H1 (cell line): ENCODE measurements at regions of chr6 and their contacts with region 1.

Region 1: DNA sequence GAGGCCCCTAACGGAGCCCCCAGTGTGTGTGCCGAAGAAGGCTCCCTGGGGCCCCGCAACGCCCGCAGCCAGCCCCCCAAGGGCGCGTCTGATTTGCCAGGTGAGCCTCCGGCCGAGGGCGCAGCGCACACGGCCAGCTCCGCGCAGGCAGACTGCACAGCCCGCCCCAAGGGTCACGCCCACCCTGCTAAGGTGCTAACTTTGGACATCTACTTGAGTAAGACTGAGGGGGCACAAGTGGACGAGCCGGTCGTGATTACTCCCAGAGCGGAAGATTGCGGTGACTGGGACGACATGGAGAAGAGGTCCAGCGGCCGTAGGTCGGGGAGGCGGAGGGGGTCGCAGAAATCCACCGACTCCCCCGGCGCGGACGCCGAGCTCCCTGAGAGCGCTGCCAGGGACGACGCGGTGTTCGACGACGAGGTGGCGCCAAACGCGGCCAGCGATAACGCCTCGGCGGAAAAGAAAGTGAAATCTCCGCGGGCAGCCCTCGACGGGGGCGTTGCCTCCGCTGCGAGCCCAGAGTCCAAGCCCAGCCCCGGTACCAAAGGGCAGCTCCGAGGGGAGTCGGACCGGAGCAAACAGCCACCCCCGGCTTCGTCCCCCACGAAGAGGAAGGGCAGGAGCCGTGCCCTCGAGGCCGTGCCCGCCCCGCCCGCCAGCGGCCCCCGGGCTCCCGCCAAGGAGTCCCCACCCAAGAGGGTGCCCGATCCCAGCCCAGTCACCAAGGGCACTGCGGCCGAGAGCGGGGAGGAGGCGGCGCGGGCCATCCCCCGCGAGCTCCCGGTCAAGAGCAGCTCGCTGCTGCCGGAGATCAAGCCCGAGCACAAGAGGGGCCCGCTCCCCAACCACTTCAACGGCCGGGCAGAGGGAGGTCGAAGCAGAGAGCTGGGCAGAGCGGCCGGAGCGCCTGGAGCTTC is 117.0 kb downstream of the RTN4IP1 start:
- DNase-seq: peak in 1 of 2 experiments; percentile 79
- H3K4me3 ChIP-seq: peak overlapping the region; percentile 37 to 69 (median 56)
- H3K27ac ChIP-seq: no peak overlapping the region
- H3K4me1 ChIP-seq: peaks cover 0 to 11% (median 4%) of the 10 kb centered on the region in 4 experiments
- H3K27me3 ChIP-seq: peaks cover 24 to 57% (median 55%) of the 10 kb centered on the region in 4 experiments
- CTCF ChIP-seq: peak; percentile 18 to 40 (median 23); a peak in 3 of 4 replicates
- EP300 ChIP-seq: no peak
- POLR2A ChIP-seq: no peak
- RAD21 ChIP-seq: peak in 1 of 2 experiments; percentile 27; a peak in 2 of 4 replicates

Region 2: GRCh38 chr6:106206905-106207304 is 305.4 kb before region 1 on chr6:
- CTCF ChIA-PET with region 1: no interaction called
- POLR2A ChIA-PET with region 1: no interaction called
- DNase-seq: no peak
- H3K4me3 ChIP-seq: no peak overlapping the region
- H3K27ac ChIP-seq: no peak overlapping the region
- H3K4me1 ChIP-seq: no peaks in the 10 kb centered on the region; a peak in 1 of 7 replicates
- H3K27me3 ChIP-seq: no peaks in the 10 kb centered on the region
- CTCF ChIP-seq: no peak
- EP300 ChIP-seq: no peak
- POLR2A ChIP-seq: no peak
- RAD21 ChIP-seq: no peak

Region 3: GRCh38 chr6:106556368-106556960 is 44.2 kb after region 1 on chr6:
- CTCF ChIA-PET with region 1: interaction called, 29 read pairs
- POLR2A ChIA-PET with region 1: no interaction called
- DNase-seq: no peak
- H3K4me3 ChIP-seq: no peak overlapping the region
- H3K27ac ChIP-seq: no peak overlapping the region
- H3K4me1 ChIP-seq: no peaks in the 10 kb centered on the region
- H3K27me3 ChIP-seq: no peaks in the 10 kb centered on the region
- CTCF ChIP-seq: peak in 1 of 3 experiments; percentile 7; a peak in 2 of 4 replicates
- EP300 ChIP-seq: no peak
- POLR2A ChIP-seq: no peak
- RAD21 ChIP-seq: peak in 1 of 2 experiments; percentile 10; a peak in 1 of 4 replicates

Region 4: DNA sequence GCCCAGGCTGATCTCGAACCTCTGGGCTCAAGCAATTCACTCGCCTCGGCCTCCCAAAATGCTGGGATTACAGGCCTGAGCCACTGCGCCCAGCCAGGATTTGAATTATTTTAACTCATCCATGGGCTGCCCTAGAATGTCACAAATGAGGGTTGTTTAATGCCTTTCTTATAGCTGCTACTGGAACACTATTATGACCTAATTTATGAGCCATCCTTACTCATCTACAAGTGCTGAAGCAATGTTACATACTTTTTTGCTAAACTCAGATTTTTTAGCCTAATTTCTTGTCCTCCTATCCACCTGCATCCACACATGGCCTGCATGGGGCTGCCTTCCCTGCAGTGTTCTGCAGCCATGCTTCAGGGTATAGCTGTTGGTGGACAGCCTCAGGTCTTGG is 57.1 kb after region 1 on chr6:
- CTCF ChIA-PET with region 1: interaction called, 29 read pairs
- POLR2A ChIA-PET with region 1: no interaction called
- DNase-seq: no peak
- H3K4me3 ChIP-seq: no peak overlapping the region
- H3K27ac ChIP-seq: no peak overlapping the region
- H3K4me1 ChIP-seq: peaks cover 0 to 3% (median 1%) of the 10 kb centered on the region in 4 experiments; a peak in 2 of 7 replicates
- H3K27me3 ChIP-seq: no peaks in the 10 kb centered on the region
- CTCF ChIP-seq: no peak
- EP300 ChIP-seq: no peak
- POLR2A ChIP-seq: no peak
- RAD21 ChIP-seq: no peak